OCI-LY7 (cell line): ENCODE measurements at regions of chr16 and their contacts with region 1.

Region 1: DNA sequence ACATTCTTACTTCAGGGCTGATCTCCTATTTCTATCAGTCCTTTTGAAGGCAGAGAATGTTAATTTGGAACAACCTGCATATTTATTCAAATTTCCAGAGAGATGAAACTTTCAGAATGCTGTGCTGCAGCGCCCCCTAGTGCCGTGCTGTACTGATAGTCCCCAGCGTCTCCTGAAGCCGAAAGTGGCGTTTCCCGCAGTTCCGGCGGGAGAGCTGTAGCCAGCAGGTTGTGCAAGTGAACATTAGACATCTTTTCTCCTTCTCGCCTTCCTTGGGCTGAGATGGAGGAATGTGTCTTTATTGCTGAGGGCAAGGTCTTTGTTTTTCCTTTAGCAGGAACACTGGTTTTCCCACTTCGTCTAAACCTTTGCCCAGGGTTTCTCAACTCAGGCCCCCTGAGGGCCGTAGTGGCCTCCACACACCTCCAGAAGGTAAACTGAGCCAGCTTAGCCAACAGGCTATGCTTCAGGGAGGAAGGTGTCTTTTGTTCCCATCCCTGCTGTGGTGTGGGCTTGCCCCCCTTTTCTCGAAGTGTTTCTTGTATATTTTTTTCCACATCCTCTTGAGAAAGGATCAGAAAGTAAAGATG is 26.4 kb downstream of the USP10 start:
- DNase-seq: peak; percentile 84
- H3K4me3 ChIP-seq: peak overlapping the region; percentile 57
- H3K27ac ChIP-seq: peak overlapping the region; percentile 56
- H3K4me1 ChIP-seq: peaks cover 80% of the 10 kb centered on the region
- CTCF ChIP-seq: peak; percentile 100

Region 2: GRCh38 chr16:84511180-84511824 is 214.9 kb before region 1 on chr16:
- CTCF ChIA-PET with region 1: interaction called, 5 read pairs
- POLR2A ChIA-PET with region 1: interaction called, 5 read pairs
- intact Hi-C with region 1: loop called (anchors 1 kb)
- DNase-seq: peak; percentile 86
- H3K4me3 ChIP-seq: peak overlapping the region; percentile 50
- H3K27ac ChIP-seq: no peak overlapping the region
- H3K4me1 ChIP-seq: peaks cover 59% of the 10 kb centered on the region
- CTCF ChIP-seq: peak; percentile 98

Region 3: GRCh38 chr16:84562174-84562815 is 163.9 kb before region 1 on chr16:
- CTCF ChIA-PET with region 1: no interaction called
- POLR2A ChIA-PET with region 1: no interaction called
- intact Hi-C with region 1: no loop called
- DNase-seq: peak; percentile 24
- H3K4me3 ChIP-seq: no peak overlapping the region
- H3K27ac ChIP-seq: peak overlapping the region; percentile 1
- H3K4me1 ChIP-seq: no peaks in the 10 kb centered on the region
- CTCF ChIP-seq: no peak

Region 4: DNA sequence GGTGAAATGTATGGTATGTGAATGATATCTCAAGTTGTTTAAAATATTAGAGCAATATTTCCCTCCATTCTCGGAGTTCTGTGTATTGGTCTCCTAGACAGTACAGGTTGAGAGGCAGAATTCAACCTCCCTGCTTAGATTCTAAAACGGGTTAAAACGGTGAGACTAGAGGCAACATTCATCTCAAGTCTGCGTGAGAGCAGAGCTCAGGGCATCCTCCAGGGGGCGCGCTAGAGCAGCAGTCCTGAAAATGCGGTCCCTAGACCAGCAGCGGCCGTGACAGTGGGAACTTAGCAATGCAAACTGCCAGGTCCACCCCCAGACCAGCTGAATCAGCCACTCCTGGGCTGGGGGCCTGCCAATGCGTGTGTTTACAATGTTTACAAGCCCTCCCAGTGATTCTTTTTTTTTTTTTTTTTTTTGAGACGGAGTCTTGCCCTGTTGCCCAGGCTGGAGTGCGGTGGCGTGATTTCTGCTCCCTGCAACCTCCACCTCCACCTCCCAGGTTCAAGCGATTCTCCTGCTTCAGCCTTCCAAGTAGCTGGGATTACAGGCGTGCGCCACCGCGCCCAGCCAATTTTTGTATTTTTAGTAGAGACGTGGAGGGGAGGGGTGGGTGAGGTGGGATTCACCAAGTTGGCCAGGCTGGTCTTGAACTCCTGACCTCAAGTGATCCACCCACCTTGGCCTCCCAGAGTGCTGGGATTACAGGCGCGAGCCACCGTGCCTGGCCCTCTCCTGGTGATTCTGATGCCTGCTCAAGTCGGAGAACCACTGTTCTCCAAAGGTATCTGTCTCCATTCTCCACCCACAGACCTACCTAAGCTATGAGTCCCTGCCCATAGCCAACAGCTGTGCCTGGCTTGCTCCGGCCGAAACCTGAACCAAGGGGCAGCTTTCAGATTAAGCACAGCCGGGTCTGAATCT is 53.6 kb before region 1 on chr16:
- CTCF ChIA-PET with region 1: interaction called, 17 read pairs
- POLR2A ChIA-PET with region 1: no interaction called
- intact Hi-C with region 1: loop called (anchors 1 kb)
- DNase-seq: peak; percentile 81
- H3K4me3 ChIP-seq: no peak overlapping the region
- H3K27ac ChIP-seq: no peak overlapping the region
- H3K4me1 ChIP-seq: peaks cover 9% of the 10 kb centered on the region
- CTCF ChIP-seq: peak; percentile 97

Region 5: DNA sequence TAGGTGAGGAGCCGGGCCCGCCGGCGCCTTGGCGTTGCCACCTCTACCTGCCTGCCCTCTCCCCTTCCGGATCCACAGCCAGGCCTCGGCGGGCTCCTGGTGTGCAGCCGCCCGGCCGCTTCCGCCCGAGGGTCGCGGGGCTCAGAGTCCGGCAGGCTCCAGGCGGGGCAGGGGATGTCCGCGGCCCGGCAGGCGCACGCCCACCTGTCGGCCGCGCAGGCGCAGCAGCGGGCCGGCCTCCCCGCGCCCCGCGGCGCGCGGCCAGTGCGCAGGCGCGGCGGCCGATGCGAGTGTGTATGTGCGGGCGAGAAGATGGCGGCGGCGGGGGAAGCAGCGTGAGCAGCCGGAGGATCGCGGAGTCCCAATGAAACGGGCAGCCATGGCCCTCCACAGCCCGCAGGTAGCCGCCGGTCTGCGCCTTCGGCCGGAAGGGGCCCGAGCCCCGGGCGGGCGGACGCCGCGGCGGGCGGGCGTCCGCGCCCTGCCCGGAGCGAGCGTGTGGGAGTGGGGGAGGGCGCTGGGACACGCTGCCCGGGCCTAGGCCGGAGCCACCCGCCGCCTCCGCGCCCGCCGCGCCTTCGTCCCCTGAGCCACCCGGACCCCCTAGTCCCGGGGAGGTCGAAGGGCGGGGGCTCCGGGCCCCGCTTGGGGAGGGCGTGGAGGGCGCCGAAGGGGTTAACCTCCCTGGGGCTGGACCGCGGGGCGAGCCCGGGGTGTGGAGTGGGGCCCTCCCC is 26.3 kb before region 1 on chr16 and contains the start of gene USP10:
- CTCF ChIA-PET with region 1: interaction called, 6 read pairs
- POLR2A ChIA-PET with region 1: interaction called, 19 read pairs
- intact Hi-C with region 1: loop called (anchors 2 kb)
- DNase-seq: peak; percentile 89
- H3K4me3 ChIP-seq: peak within 1 kb of the TSS; percentile 97
- H3K27ac ChIP-seq: peak within 1 kb of the TSS; percentile 66
- H3K4me1 ChIP-seq: peaks cover 38% of the 10 kb centered on the region
- CTCF ChIP-seq: no peak
- total RNA-seq, gene USP10: 65.9 and 69.8 TPM in 2 replicates

Region 6: GRCh38 chr16:84746882-84747281 is 20.7 kb after region 1 on chr16:
- CTCF ChIA-PET with region 1: no interaction called
- POLR2A ChIA-PET with region 1: no interaction called
- intact Hi-C with region 1: no loop called
- DNase-seq: peak; percentile 19
- H3K4me3 ChIP-seq: no peak overlapping the region
- H3K27ac ChIP-seq: no peak overlapping the region
- H3K4me1 ChIP-seq: peaks cover 5% of the 10 kb centered on the region
- CTCF ChIP-seq: peak; percentile 70